Endothelial cell of umbilical vein (primary cell): ENCODE measurements at regions of chr1 and their contacts with region 1.

Region 1: DNA sequence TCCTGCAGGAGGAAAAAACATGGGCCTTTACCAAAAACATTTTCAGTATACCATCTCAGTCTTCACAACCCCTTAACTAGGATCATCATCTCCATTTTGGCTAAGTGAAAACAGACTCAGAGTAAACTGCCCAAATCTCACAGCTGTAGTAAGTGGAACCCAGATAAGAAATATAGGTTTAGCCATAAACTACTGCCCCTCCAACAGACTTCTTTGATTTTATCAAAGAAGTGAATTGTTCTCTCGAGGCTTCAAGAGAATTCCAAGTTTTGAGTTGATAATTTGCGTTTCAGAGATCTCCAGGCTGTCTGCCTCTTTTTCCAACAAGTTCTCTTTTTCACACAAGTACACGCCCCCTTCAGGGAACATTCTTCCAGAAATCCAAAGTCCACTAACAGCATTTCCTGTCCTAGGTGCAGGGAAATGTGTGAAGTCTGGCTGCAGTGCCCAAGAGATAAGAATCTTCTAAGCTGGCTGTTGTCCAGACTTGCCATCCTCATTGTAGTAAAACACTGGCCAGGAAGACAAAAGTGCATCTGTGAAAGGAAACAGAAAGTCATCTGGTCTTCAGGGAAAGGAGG is 30.8 kb downstream of the RNF19B start:
- DNase-seq: peak; percentile 95
- H3K4me3 ChIP-seq: no peak overlapping the region
- H3K27ac ChIP-seq: peak overlapping the region; percentile 33
- H3K4me1 ChIP-seq: peaks cover 21% of the 10 kb centered on the region
- H3K27me3 ChIP-seq: no peaks in the 10 kb centered on the region
- CTCF ChIP-seq: no peak
- POLR2A ChIP-seq: peak; percentile 16

Region 2: GRCh38 chr1:32706491-32706890 is 227.3 kb before region 1 on chr1:
- CTCF ChIA-PET with region 1: no interaction called
- POLR2A ChIA-PET with region 1: no interaction called
- dilution Hi-C with region 1: no loop called
- intact Hi-C with region 1: no loop called
- DNase-seq: no peak
- H3K4me3 ChIP-seq: no peak overlapping the region
- H3K27ac ChIP-seq: no peak overlapping the region
- H3K4me1 ChIP-seq: peaks cover 11% of the 10 kb centered on the region
- H3K27me3 ChIP-seq: no peaks in the 10 kb centered on the region
- CTCF ChIP-seq: no peak
- POLR2A ChIP-seq: no peak

Region 3: DNA sequence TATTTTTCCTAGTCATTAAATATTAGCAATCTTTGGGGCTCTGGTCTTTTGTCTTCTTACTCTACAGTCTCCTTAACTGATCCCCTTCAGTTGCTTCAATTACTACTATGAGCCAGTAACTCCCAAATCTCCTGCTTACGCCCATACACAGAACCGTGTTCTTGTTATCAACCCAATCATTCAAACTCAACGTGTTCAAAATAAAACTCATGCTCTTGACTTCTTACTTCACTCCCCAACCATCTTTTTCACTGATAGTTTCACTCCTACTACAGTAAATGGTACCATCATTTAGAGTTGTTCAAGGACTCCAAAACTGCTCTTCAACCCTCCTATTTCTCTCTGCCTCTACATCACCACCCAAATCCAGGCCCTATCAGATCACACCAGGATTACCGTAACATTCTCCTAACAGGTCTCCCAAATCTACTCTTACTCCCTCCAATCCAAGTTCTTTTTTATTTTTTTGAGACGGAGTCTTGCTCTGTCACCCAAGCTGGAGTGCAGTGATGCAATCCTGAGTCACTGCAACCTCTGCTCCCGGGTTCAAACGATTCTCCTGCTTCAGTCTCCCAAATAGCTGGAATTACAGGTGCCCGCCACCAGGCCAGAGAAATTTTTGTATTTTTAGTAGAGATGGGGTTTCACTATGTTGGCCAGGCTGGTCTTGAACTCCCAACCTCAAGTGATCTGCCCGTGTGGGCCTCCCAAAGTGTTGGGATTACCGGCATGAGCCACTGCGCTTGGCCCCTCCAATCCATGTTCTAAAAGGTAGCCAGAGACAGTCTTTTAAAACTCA is 119.7 kb before region 1 on chr1:
- CTCF ChIA-PET with region 1: no interaction called
- POLR2A ChIA-PET with region 1: no interaction called
- dilution Hi-C with region 1: no loop called
- intact Hi-C with region 1: no loop called
- DNase-seq: no peak
- H3K4me3 ChIP-seq: no peak overlapping the region
- H3K27ac ChIP-seq: no peak overlapping the region
- H3K4me1 ChIP-seq: peaks cover 25% of the 10 kb centered on the region
- H3K27me3 ChIP-seq: no peaks in the 10 kb centered on the region
- CTCF ChIP-seq: no peak
- POLR2A ChIP-seq: no peak

Region 4: GRCh38 chr1:32919811-32920733 is 13.8 kb before region 1 on chr1:
- CTCF ChIA-PET with region 1: interaction called, 10 read pairs
- POLR2A ChIA-PET with region 1: no interaction called
- dilution Hi-C with region 1: no loop called
- intact Hi-C with region 1: no loop called
- DNase-seq: no peak
- H3K4me3 ChIP-seq: no peak overlapping the region
- H3K27ac ChIP-seq: no peak overlapping the region
- H3K4me1 ChIP-seq: no peaks in the 10 kb centered on the region
- H3K27me3 ChIP-seq: peaks cover 4% of the 10 kb centered on the region in 2 experiments
- CTCF ChIP-seq: no peak
- POLR2A ChIP-seq: no peak

Region 5: DNA sequence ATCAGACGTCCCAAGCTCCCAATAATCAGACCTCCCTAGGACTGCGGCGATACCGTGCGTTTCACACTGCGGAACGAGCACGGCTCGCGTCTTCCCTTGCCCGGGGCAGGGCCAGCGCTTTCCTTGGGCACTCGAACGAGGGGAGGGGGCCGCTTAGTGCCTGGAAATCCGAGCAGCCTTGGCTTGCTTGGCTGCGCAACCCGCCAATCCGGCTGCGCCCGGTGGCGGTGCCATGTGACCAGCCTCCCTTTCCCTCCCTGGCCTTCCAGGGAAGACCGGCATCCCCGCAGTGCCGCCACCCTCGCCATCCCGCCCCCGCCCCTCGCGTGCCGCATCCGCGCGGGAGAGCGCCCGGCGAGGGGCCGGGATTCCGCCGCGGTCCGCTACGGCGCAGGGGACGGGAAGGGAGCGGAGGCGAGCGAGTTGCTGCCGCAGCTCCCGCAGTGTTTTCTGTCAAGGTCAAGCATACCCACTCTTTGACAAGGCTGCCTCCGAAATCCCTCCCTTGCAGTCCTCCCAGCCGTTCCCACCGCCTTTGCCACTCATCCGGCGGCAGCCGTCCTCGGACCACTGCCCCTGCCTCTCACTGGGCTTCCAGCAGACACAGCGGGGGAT is 39.1 kb after region 1 on chr1:
- CTCF ChIA-PET with region 1: interaction called, 12 read pairs
- POLR2A ChIA-PET with region 1: no interaction called
- dilution Hi-C with region 1: no loop called
- intact Hi-C with region 1: no loop called
- DNase-seq: peak; percentile 88
- H3K4me3 ChIP-seq: peak overlapping the region in 2 of 3 experiments; percentile 18 to 56
- H3K27ac ChIP-seq: no peak overlapping the region
- H3K4me1 ChIP-seq: no peaks in the 10 kb centered on the region
- H3K27me3 ChIP-seq: no peaks in the 10 kb centered on the region
- CTCF ChIP-seq: no peak
- POLR2A ChIP-seq: peak; percentile 15

Region 6: DNA sequence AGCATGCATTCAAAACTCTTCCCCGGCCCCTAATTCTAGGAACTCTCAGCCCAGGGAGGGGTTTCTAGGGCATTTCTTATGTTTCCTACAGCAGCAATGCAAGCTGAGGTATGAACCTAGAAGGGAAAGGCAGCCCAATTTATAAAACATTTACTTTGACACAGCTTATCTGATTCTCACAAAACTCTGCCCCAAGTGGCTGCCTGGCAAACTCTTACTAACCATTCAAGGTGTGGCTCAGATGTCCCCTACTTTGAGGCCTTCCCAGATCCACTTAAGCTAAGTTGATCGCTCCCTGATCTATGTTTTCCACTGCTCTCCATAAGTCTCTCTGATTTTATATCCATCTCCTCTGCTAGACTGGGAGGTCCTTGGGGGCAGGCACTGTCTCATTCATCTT is 67.5 kb after region 1 on chr1:
- CTCF ChIA-PET with region 1: interaction called, 340 read pairs
- POLR2A ChIA-PET with region 1: interaction called, 3 read pairs
- dilution Hi-C with region 1: no loop called
- intact Hi-C with region 1: no loop called
- DNase-seq: no peak
- H3K4me3 ChIP-seq: no peak overlapping the region
- H3K27ac ChIP-seq: no peak overlapping the region
- H3K4me1 ChIP-seq: peaks cover 69% of the 10 kb centered on the region
- H3K27me3 ChIP-seq: no peaks in the 10 kb centered on the region
- CTCF ChIP-seq: peak in 1 of 2 donors; percentile 19
- POLR2A ChIP-seq: no peak

Region 7: DNA sequence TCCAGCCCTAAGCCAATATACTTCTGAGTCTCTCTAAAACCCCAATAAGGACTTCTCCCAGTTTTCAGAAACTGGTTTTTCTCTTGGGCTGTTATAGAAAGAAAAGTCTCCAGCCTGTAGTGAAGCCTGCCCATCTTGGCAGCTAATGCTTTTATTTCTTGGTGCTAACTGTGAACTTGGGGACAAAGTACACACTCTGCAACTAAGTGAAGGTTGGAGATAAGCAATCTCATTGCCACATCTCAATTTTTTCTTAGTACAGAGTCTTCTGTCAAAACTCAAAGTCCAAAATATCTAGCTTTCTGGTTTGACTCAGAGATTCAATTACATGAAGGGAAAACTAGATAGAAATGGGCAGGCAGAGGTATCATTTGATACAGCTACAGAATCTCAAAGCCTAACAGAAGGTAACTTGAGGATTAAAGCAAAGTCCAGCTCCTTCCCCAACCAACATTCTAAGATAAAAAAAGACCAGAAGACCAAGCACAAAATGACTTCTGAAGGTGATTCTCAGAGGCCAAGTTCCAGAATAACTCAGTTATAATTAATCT is 88.9 kb after region 1 on chr1:
- CTCF ChIA-PET with region 1: interaction called, 14 read pairs
- POLR2A ChIA-PET with region 1: no interaction called
- dilution Hi-C with region 1: no loop called
- intact Hi-C with region 1: no loop called
- DNase-seq: no peak
- H3K4me3 ChIP-seq: no peak overlapping the region
- H3K27ac ChIP-seq: no peak overlapping the region
- H3K4me1 ChIP-seq: no peaks in the 10 kb centered on the region
- H3K27me3 ChIP-seq: no peaks in the 10 kb centered on the region
- CTCF ChIP-seq: no peak
- POLR2A ChIP-seq: no peak

Region 8: DNA sequence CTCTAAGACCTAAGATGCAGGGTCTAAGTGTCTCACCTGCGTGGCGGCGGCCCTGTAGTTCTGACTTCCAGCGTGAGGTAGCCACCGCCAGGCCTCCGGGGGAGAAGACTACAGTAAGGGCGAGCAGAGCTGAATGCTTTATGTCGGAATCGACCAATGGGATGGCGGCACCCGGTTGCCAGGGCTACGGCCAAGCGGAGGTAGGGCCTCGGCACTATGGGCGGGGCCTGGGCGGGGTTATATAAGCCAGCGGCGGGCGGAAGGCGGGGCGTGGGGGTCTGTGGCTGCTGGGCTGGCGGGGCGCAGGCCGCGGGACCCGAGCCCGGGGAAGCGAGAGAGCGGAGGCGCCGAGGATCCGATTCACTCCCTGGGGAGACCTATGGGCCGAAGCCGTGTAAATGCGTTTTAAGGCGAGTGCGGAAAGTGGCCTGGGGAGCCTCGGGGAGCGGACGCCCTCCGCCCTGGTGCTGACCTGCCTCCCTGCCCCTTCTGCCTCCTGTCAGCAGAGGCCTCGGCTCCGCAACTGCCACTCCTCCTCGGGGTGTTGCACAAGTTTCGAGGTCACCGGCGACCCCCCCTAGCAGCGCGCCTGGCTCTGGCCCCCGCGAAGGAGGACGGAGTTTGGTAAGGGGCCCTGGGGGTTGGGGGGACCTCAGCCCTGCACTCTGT is 147.2 kb after region 1 on chr1 and contains the start of gene AZIN2:
- CTCF ChIA-PET with region 1: interaction called, 28 read pairs
- POLR2A ChIA-PET with region 1: no interaction called
- dilution Hi-C with region 1: no loop called
- intact Hi-C with region 1: loop called (anchors 1 kb)
- DNase-seq: peak; percentile 92
- H3K4me3 ChIP-seq: peak within 1 kb of the TSS; percentile 28 to 64 (median 55)
- H3K27ac ChIP-seq: no peak within 1 kb of the TSS
- H3K4me1 ChIP-seq: peaks cover 10% of the 10 kb centered on the region
- H3K27me3 ChIP-seq: peaks cover 11 to 22% of the 10 kb centered on the region in 2 experiments
- CTCF ChIP-seq: no peak
- POLR2A ChIP-seq: no peak
- total RNA-seq, gene AZIN2: 0.76 and 0.91 TPM in 2 replicates